ENCODE measurements at regions of chr22 and their contacts with region 1.

Region 1: DNA sequence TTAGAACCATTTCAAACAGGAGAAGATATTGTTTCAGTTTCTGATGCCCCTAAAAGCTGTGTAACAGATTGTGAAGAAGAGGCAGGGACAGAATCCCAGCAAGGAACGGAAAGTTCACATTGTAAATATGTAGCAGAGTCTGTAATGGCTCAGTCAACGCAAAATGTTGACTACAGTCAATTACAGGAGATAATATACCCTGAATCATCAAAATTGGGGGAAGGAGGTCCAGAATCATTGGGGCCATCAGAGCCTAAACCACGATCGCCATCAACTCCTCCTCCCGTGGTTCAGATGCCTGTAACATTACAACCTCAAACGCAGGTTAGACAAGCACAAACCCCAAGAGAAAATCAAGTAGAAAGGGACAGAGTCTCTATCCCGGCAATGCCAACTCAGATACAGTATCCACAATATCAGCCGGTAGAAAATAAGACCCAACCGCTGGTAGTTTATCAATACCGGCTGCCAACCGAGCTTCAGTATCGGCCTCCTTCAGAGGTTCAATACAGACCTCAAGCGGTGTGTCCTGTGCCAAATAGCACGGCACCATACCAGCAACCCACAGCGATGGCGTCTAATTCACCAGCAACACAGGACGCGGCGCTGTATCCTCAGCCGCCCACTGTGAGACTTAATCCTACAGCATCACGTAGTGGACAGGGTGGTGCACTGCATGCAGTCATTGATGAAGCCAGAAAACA is 40.8 kb downstream of the IGLL1 start:
- DNase-seq: peak; percentile 90
- H3K4me3 ChIP-seq: no peak overlapping the region
- H3K27ac ChIP-seq: no peak overlapping the region
- H3K4me1 ChIP-seq: peaks cover 38% of the 10 kb centered on the region
- H3K27me3 ChIP-seq: no peaks in the 10 kb centered on the region
- CTCF ChIP-seq: peak; percentile 83

Region 2: DNA sequence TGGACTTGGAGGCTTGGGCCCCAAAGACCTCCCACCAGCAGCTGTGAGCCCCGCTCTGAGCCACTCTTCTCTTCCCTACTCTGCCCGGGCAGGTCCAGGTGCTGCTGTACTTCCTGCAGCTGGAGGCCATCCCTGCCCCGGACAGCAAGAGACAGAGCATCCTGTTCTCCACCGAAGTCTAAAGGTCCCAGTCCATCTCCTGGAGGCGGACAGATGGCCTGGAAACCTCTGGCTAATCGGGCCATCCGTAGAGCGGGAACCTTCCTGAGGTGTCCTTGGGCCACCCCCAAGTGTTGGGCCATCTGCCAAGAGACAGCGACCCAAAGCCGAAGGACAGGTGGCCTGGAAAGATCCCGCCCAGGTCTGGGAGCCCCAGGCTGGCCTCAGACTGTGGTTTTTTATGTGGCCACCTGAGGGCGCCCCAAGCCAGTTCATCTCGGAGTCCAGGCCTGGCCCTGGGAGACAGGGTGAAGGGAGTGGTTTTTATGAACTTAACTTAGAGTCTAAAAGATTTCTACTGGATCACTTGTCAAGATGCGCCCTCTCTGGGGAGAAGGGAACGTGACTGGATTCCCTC is 223.9 kb before region 1 on chr22:
- CTCF ChIA-PET with region 1: no interaction called
- POLR2A ChIA-PET with region 1: no interaction called
- intact Hi-C with region 1: loop called (anchors 10 kb)
- DNase-seq: peak; percentile 73
- H3K4me3 ChIP-seq: no peak overlapping the region
- H3K27ac ChIP-seq: no peak overlapping the region
- H3K4me1 ChIP-seq: no peaks in the 10 kb centered on the region
- H3K27me3 ChIP-seq: no peaks in the 10 kb centered on the region
- CTCF ChIP-seq: peak; percentile 62

Region 3: GRCh38 chr22:23402275-23403151 is 136.8 kb before region 1 on chr22:
- CTCF ChIA-PET with region 1: interaction called, 7 read pairs
- POLR2A ChIA-PET with region 1: no interaction called
- intact Hi-C with region 1: loop called (anchors 5 kb)
- DNase-seq: peak; percentile 73
- H3K4me3 ChIP-seq: peak overlapping the region; percentile 39
- H3K27ac ChIP-seq: no peak overlapping the region
- H3K4me1 ChIP-seq: no peaks in the 10 kb centered on the region
- H3K27me3 ChIP-seq: no peaks in the 10 kb centered on the region
- CTCF ChIP-seq: peak; percentile 61

Region 4: GRCh38 chr22:23553924-23554870 is 14.9 kb after region 1 on chr22:
- CTCF ChIA-PET with region 1: no interaction called
- POLR2A ChIA-PET with region 1: no interaction called
- intact Hi-C with region 1: no loop called
- DNase-seq: no peak
- H3K4me3 ChIP-seq: no peak overlapping the region
- H3K27ac ChIP-seq: no peak overlapping the region
- H3K4me1 ChIP-seq: no peaks in the 10 kb centered on the region
- H3K27me3 ChIP-seq: no peaks in the 10 kb centered on the region
- CTCF ChIP-seq: no peak

Region 5: DNA sequence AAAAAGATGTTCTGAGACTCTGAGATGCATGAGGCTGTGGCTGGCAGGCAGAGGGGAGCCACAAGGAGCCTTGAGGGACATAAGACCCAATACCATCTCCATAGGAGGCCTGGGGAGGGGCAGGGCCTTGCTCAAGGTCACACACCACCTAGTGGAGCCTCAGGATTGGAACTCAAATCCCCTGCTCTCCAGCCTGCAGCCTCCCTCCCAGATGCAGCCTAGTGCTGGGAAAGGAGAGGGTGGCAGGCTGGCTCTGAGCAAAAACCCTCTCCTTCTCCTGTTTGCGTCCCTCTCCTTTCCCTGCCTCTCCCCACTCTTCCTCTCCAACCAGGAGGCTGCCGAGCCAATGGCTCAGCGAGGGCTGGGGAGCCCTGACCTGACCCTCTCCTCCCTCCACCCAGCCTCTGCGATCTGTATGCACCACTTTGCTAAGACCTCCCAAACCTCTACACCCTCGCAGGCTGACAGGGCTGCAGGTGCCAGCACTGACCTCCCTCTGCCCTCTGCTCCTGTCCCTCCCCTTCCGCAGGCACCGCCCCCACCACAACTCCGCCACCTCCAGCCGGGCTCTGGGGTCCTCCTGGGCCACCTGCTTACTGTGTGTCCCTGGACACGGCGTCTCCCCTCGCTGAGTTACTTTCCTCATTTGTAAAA is 26.1 kb after region 1 on chr22:
- CTCF ChIA-PET with region 1: interaction called, 10 read pairs
- POLR2A ChIA-PET with region 1: no interaction called
- intact Hi-C with region 1: no loop called
- DNase-seq: peak; percentile 33
- H3K4me3 ChIP-seq: peak overlapping the region; percentile 44
- H3K27ac ChIP-seq: no peak overlapping the region
- H3K4me1 ChIP-seq: peaks cover 5% of the 10 kb centered on the region
- H3K27me3 ChIP-seq: peaks cover 14% of the 10 kb centered on the region
- CTCF ChIP-seq: no peak

Region 6: GRCh38 chr22:23591201-23591791 is 52.0 kb after region 1 on chr22:
- CTCF ChIA-PET with region 1: interaction called, 20 read pairs
- POLR2A ChIA-PET with region 1: no interaction called
- intact Hi-C with region 1: loop called (anchors 1 kb)
- DNase-seq: peak; percentile 76
- H3K4me3 ChIP-seq: no peak overlapping the region
- H3K27ac ChIP-seq: no peak overlapping the region
- H3K4me1 ChIP-seq: no peaks in the 10 kb centered on the region
- H3K27me3 ChIP-seq: no peaks in the 10 kb centered on the region
- CTCF ChIP-seq: peak; percentile 98

Region 7: DNA sequence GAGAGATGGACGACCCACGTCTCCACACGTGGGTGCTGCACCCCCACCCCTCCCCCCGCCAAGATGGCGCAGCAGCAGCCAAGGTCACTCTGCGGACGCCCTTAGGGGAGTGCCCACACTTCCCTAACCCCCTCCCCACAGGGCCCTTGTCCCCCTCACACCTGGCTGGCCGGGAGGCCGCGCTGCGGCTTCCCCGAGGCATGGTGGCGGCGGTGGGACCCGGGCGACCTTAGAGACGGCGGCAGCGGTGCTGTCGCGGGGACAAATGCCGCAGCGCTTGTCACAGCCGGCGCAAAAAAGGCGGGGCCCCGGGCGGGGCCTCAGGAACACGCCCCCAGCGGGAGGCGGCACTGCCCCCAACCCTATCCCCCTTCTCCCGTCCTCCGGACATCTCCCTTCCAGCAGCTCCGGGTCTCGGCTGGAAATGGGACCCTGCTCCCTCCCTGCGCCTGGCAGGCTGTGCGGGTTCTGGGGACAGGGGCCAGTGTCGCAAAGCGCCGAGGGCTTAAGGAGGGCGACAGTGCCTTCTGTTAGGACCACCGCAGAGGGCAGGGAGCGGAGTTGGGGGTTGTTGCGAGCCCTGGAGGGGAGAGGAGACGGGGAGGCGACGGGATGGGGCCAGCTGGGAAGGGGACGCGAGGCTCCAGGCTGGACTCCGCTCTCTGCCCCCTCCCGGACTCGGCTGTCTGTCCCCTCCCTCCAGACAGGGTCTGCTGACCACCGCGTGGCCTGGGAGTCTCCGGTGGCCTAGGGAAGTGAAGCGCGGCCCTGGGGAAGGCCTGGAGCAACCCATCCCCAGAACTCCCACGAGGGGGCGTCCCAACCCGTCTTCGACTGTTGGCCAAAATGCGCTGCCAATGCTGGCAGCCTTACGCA is 228.6 kb after region 1 on chr22 and contains the start of gene CHCHD10:
- CTCF ChIA-PET with region 1: no interaction called
- POLR2A ChIA-PET with region 1: no interaction called
- intact Hi-C with region 1: loop called (anchors 5 kb)
- DNase-seq: peak; percentile 92
- H3K4me3 ChIP-seq: peak within 1 kb of the TSS; percentile 70
- H3K27ac ChIP-seq: peak within 1 kb of the TSS; percentile 90
- H3K4me1 ChIP-seq: peaks cover 49% of the 10 kb centered on the region
- H3K27me3 ChIP-seq: no peaks in the 10 kb centered on the region
- CTCF ChIP-seq: peak; percentile 85
- total RNA-seq, gene CHCHD10: 117 and 128 TPM in 2 replicates

Region 8: DNA sequence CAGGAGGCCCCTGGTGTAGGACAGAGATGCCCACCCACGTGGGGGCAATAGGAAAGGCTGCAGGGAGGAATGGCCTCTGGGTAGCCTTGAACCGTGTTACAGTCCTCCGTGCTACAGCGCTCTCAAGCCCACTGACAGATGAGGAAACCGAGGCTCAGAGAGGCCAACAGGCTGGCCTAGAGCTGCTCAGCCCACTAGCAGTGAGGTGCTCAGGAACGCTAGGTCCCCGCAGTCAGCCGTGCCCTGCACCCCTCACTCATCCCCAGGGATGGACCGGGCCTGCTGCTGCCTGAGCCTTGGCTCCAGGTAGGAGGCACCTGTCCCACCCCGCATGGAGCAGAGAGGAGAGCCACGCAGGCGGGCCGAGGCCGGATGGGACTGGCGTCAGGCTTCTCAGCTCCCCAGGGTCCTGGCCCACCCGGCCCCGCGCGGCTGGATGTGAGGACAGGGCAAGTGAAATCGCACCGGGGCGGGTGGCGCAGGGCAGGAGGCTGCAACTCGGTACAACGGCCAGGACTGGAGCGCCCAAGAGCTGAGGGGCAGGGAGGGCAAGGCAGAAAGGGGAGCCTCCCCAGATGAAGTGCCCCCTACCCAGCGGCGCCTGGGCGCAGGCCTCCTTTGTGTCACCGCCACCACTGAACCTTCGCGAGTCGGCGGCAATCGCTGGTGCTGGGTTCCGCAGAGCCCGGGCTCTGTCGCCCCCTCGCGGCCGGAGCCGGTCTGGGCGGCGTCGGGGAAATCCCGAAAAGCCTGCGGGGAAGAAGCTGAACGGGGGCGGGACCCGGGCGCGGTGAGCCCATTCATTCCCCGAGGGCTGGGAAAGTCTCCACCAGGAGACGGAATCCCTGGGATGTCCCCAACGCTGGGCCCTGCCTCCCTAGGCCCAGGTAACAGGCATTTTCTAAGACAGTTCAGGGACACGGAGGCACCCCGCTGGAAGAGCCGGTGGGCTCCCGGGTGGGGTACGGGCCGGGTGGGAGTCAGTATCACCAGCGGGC is 310.0 kb after region 1 on chr22:
- CTCF ChIA-PET with region 1: interaction called, 6 read pairs
- POLR2A ChIA-PET with region 1: no interaction called
- intact Hi-C with region 1: loop called (anchors 5 kb)
- DNase-seq: peak; percentile 91
- H3K4me3 ChIP-seq: peak overlapping the region; percentile 19
- H3K27ac ChIP-seq: no peak overlapping the region
- H3K4me1 ChIP-seq: peaks cover 4% of the 10 kb centered on the region
- H3K27me3 ChIP-seq: no peaks in the 10 kb centered on the region
- CTCF ChIP-seq: peak; percentile 98